Breast epithelium (tissue), 4 donors: ENCODE measurements at regions of chr16 and their contacts with region 1.

Region 1: GRCh38 chr16:77393955-77394354 is 40.9 kb downstream of the ADAMTS18 start:
- DNase-seq: no peak
- H3K4me3 ChIP-seq: no peak overlapping the region
- H3K27ac ChIP-seq: no peak overlapping the region
- H3K4me1 ChIP-seq: no peaks in the 10 kb centered on the region
- H3K27me3 ChIP-seq: no peaks in the 10 kb centered on the region
- CTCF ChIP-seq: no peak
- POLR2A ChIP-seq: no peak

Region 2: GRCh38 chr16:77376358-77376757 is 17.6 kb before region 1 on chr16:
- intact Hi-C with region 1: loop called (anchors 1 kb)
- DNase-seq: no peak
- H3K4me3 ChIP-seq: no peak overlapping the region
- H3K27ac ChIP-seq: no peak overlapping the region
- H3K4me1 ChIP-seq: no peaks in the 10 kb centered on the region
- H3K27me3 ChIP-seq: no peaks in the 10 kb centered on the region
- CTCF ChIP-seq: no peak
- POLR2A ChIP-seq: no peak